K562 (cell line): ENCODE measurements at regions of chr7 and their contacts with region 1.

Region 1: GRCh38 chr7:123494193-123494796 is 40.1 kb downstream of the IQUB start:
- DNase-seq: peak; percentile 52 to 81 (median 54)
- ATAC-seq: peak; percentile 58
- H3K4me3 ChIP-seq: no peak overlapping the region
- H3K27ac ChIP-seq: no peak overlapping the region
- H3K4me1 ChIP-seq: peaks cover 0 to 17% of the 10 kb centered on the region in 2 experiments; a peak in 4 of 5 replicates
- H3K27me3 ChIP-seq: no peaks in the 10 kb centered on the region
- CTCF ChIP-seq: peak in 2 of 3 experiments; percentile 81 to 95; a peak in 5 of 6 replicates
- EP300 ChIP-seq: 0 out of 2 replicates have a peak, but pooled peaks have one; percentile 3
- POLR2A ChIP-seq: no peak
- RAD21 ChIP-seq: peak; percentile 95 to 96

Region 2: GRCh38 chr7:123534383-123535260 is 40.3 kb after region 1 on chr7 and contains the start of gene IQUB:
- CTCF ChIA-PET with region 1: interaction called, 45 read pairs
- POLR2A ChIA-PET with region 1: no interaction called
- in situ Hi-C with region 1: loop called (anchors 5 kb)
- intact Hi-C with region 1: loop called (anchors 1 kb)
- DNase-seq: peak; percentile 99
- ATAC-seq: peak; percentile 76
- H3K4me3 ChIP-seq: peak within 1 kb of the TSS; percentile 69
- H3K27ac ChIP-seq: peak within 1 kb of the TSS; percentile 86
- H3K4me1 ChIP-seq: peaks cover 9 to 19% of the 10 kb centered on the region in 2 experiments
- H3K27me3 ChIP-seq: no peaks in the 10 kb centered on the region
- CTCF ChIP-seq: no peak
- EP300 ChIP-seq: no peak
- POLR2A ChIP-seq: peak; percentile 93
- RAD21 ChIP-seq: no peak
- polyA plus RNA-seq, gene IQUB: 1.3 to 1.7 TPM

Region 3: GRCh38 chr7:123557398-123558288 is 63.3 kb after region 1 on chr7 and contains the start of gene NDUFA5:
- CTCF ChIA-PET with region 1: no interaction called
- POLR2A ChIA-PET with region 1: interaction called, 3 read pairs
- in situ Hi-C with region 1: no loop called
- intact Hi-C with region 1: loop called (anchors 1 kb)
- DNase-seq: peak; percentile 97 to 100 (median 98)
- ATAC-seq: peak; percentile 91
- H3K4me3 ChIP-seq: peak within 1 kb of the TSS; percentile 63
- H3K27ac ChIP-seq: peak within 1 kb of the TSS; percentile 95
- H3K4me1 ChIP-seq: peaks cover 13 to 27% of the 10 kb centered on the region in 2 experiments
- H3K27me3 ChIP-seq: no peaks in the 10 kb centered on the region
- CTCF ChIP-seq: peak in 1 of 3 experiments; percentile 32; a peak in 2 of 6 replicates
- EP300 ChIP-seq: no peak
- POLR2A ChIP-seq: peak; percentile 96
- RAD21 ChIP-seq: no peak
- polyA plus RNA-seq, gene NDUFA5: 669 to 677 TPM

Region 4: GRCh38 chr7:123624527-123625183 is 130.4 kb after region 1 on chr7:
- CTCF ChIA-PET with region 1: no interaction called
- POLR2A ChIA-PET with region 1: interaction called, 4 read pairs
- in situ Hi-C with region 1: no loop called
- intact Hi-C with region 1: loop called (anchors 2 kb)
- DNase-seq: peak; percentile 76 to 93 (median 78)
- ATAC-seq: peak; percentile 91
- H3K4me3 ChIP-seq: no peak overlapping the region
- H3K27ac ChIP-seq: peak overlapping the region; percentile 11; the same call in 1 of the 3 replicates
- H3K4me1 ChIP-seq: peaks cover 0 to 6% of the 10 kb centered on the region in 2 experiments; a peak in 2 of 5 replicates
- H3K27me3 ChIP-seq: no peaks in the 10 kb centered on the region; a peak in 1 of 5 replicates
- CTCF ChIP-seq: peak; percentile 92 to 99 (median 97)
- EP300 ChIP-seq: 0 out of 2 replicates have a peak, but pooled peaks have one; percentile 29
- POLR2A ChIP-seq: no peak
- RAD21 ChIP-seq: peak; percentile 54 to 85

Region 5: GRCh38 chr7:123705211-123705901 is 211.1 kb after region 1 on chr7:
- CTCF ChIA-PET with region 1: interaction called, 4 read pairs
- POLR2A ChIA-PET with region 1: no interaction called
- in situ Hi-C with region 1: no loop called
- intact Hi-C with region 1: loop called (anchors 1 kb)
- DNase-seq: no peak
- ATAC-seq: peak; percentile 17
- H3K4me3 ChIP-seq: no peak overlapping the region
- H3K27ac ChIP-seq: no peak overlapping the region
- H3K4me1 ChIP-seq: peaks cover 0 to 10% of the 10 kb centered on the region in 2 experiments; a peak in 3 of 5 replicates
- H3K27me3 ChIP-seq: no peaks in the 10 kb centered on the region
- CTCF ChIP-seq: no peak
- EP300 ChIP-seq: no peak
- POLR2A ChIP-seq: no peak
- RAD21 ChIP-seq: no peak

Region 6: DNA sequence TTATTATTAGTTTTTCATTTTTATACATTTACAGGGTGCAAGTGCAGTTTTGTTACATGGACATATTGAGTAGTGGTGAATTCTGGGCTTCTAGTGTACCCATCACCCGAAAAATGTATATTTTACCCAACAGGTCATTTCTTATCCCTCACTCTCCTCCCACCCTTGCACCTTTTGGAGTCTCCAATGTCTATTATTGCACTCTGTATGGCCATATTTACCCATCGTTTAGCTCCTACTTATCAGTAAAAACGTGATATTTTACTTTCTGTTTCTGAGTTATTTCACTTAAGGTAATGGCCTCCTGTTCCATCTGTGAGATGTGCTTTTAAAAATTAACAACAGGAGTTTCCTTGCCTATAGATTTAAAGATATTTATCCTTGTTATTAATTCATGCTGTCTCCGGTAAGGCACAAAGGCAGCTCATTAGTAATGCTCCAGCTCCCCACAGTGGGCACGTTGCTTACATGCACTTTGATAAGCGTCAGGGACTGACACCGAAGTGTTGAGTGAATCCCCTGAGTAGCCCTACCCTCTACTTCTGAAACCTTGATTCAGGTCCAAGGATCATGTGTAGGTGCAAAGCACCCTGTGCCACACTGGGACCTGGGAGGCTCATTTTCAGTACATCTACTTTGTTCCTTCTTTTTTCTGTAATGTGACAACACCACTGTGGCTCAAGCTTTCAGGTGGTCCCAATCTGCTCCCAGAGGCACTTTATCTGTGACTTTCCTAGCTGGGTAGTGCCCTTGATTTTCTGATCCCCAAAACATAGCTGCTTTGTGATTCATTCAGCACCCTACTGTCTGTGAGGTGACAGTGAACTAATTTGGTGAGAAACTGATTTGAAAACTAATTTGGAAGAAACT is 377.9 kb after region 1 on chr7:
- CTCF ChIA-PET with region 1: interaction called, 4 read pairs
- POLR2A ChIA-PET with region 1: no interaction called
- in situ Hi-C with region 1: no loop called
- intact Hi-C with region 1: loop called (anchors 5 kb)
- DNase-seq: peak in 2 of 4 experiments; percentile 45 to 67
- ATAC-seq: peak; percentile 95
- H3K4me3 ChIP-seq: no peak overlapping the region
- H3K27ac ChIP-seq: no peak overlapping the region
- H3K4me1 ChIP-seq: no peaks in the 10 kb centered on the region
- H3K27me3 ChIP-seq: peaks cover 0 to 9% of the 10 kb centered on the region in 2 experiments; a peak in 1 of 5 replicates
- CTCF ChIP-seq: peak; percentile 62 to 82 (median 79)
- EP300 ChIP-seq: no peak
- POLR2A ChIP-seq: no peak
- RAD21 ChIP-seq: peak; percentile 89 to 94

Region 7: DNA sequence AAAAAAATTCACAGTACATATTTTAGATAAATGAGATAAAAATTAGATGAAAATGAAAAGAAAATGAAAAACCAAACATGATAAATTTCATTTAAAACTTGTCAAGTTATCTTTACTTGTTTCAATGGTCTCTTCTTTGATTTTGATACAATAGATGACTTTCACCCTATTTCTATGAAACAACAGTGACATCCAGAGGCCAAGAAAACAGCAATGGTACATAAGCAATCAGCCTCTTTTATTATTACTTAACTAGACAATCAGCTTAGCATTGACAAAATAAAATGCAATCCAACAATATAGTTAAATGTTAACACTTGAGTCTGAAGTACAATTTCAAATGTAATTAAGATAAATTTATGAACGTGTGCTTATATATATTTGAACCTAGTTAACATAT is 1346.1 kb after region 1 on chr7:
- CTCF ChIA-PET with region 1: no interaction called
- POLR2A ChIA-PET with region 1: no interaction called
- in situ Hi-C with region 1: no loop called
- intact Hi-C with region 1: no loop called
- DNase-seq: peak in 1 of 4 experiments; percentile 11
- ATAC-seq: no peak
- H3K4me3 ChIP-seq: no peak overlapping the region
- H3K27ac ChIP-seq: no peak overlapping the region
- H3K4me1 ChIP-seq: no peaks in the 10 kb centered on the region
- H3K27me3 ChIP-seq: no peaks in the 10 kb centered on the region
- CTCF ChIP-seq: peak in 1 of 3 experiments; percentile 26; a peak in 1 of 6 replicates
- EP300 ChIP-seq: no peak
- POLR2A ChIP-seq: no peak
- RAD21 ChIP-seq: peak; percentile 35 to 50; a peak in 3 of 4 replicates